Caco-2 (cell line): ENCODE measurements at regions of chr6 and their contacts with region 1.

Region 1: GRCh38 chr6:89122625-89123024 is 4.8 kb upstream of the SRSF12 start:
- DNase-seq: peak in 1 of 2 experiments; percentile 45
- H3K4me3 ChIP-seq: no peak overlapping the region
- H3K4me3 Mint-ChIP-seq: no peak overlapping the region
- H3K27ac Mint-ChIP-seq: no peak overlapping the region
- H3K4me1 ChIP-seq: no peaks in the 10 kb centered on the region
- H3K4me1 Mint-ChIP-seq: no peaks in the 10 kb centered on the region
- H3K27me3 ChIP-seq: no peaks in the 10 kb centered on the region
- H3K27me3 Mint-ChIP-seq: no peaks in the 10 kb centered on the region
- CTCF ChIP-seq: peak; percentile 61 to 71

Region 2: DNA sequence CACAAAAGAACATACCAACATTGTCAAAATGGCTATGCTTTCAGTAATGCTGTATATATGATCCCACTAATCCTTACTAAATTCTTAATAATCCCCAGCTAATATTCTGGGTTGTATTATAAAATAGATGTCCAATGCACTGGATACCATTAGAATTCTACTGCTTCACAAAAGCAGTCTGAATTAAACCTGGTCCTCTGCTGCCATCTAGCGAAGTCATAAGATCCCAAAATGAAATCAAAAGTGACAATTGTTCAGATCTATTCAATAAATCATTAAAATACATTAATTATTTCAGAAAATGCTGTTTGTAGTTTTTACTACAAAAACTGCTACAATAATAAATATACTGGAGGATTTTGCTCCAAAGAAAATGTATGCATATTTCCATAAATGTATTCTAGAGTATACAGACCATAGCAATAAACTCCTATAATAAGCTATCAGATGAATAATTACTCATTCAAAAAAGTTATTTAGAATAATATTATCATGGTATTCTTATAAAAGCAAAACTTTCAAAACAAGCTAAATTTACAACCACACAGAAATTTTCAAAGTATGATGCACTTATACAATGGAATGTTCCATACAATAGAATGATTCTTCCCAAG is 251.8 kb before region 1 on chr6:
- CTCF ChIA-PET with region 1: no interaction called
- POLR2A ChIA-PET with region 1: no interaction called
- intact Hi-C with region 1: no loop called
- DNase-seq: peak in 1 of 2 experiments; percentile 51
- H3K4me3 ChIP-seq: no peak overlapping the region
- H3K4me3 Mint-ChIP-seq: no peak overlapping the region
- H3K27ac Mint-ChIP-seq: no peak overlapping the region
- H3K4me1 ChIP-seq: 0 out of 2 replicates have a peak, but pooled peaks cover 3% of the 10 kb centered on the region
- H3K4me1 Mint-ChIP-seq: peaks cover 12% of the 10 kb centered on the region
- H3K27me3 ChIP-seq: no peaks in the 10 kb centered on the region
- H3K27me3 Mint-ChIP-seq: no peaks in the 10 kb centered on the region
- CTCF ChIP-seq: peak; percentile 46 to 56

Region 3: DNA sequence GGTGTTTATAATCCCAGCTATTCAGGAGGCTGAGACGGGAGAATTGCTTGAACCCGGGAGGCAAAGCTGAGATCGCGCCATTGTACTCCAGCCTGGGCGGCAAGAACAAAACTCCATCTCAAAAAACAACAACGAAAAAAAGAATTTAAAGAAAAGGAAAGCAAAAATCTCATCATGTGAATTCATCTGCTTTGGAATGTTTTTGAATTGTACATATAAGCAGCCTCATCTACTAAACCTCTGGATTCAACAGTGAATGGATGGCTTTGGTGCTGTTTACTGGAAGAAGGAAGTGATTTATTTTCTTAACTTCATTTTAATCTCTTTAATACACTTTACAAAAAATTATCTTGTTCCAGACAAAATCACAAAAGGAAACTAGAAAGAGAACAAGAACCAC is 93.9 kb before region 1 on chr6:
- CTCF ChIA-PET with region 1: no interaction called
- POLR2A ChIA-PET with region 1: no interaction called
- intact Hi-C with region 1: no loop called
- DNase-seq: no peak
- H3K4me3 ChIP-seq: no peak overlapping the region
- H3K4me3 Mint-ChIP-seq: no peak overlapping the region
- H3K27ac Mint-ChIP-seq: no peak overlapping the region
- H3K4me1 ChIP-seq: no peaks in the 10 kb centered on the region
- H3K4me1 Mint-ChIP-seq: no peaks in the 10 kb centered on the region
- H3K27me3 ChIP-seq: no peaks in the 10 kb centered on the region
- H3K27me3 Mint-ChIP-seq: no peaks in the 10 kb centered on the region
- CTCF ChIP-seq: no peak

Region 4: DNA sequence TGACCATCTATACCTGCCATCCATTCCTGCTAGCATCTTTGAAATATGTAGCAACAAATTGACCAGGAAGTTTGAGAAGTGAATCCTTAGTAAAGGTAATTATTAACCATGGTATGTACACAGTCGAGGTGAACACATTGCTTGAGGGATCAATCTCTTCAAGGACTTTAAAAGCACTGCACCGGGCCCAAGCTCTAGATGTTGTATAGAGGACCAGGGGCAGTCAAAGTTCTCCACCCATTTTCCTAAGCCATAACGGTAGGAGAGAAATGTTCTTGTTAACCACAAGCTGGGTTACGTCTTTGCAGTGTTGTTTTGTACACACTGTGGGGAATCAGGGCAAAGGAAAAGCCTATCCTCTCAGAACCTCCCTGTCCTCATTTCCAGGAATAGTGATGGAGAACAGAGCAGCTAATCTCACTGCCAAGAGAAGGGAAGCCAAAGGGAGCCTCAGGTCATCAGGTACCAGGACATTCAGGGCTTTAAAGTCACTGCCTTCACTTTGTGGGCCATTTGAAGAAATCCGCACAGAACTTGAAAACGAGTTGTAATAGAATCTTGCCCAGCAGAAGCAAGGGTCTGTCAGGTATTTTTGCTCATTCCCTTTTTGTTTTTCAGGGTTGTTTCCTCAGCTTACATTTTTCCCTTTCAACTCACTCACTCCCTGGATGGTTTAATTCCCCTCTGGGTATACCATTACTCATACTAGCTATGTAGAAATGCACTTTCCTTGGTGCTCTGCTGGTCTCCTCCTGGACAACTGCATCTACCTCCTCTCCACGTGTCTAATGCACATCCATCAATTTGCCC is 17.9 kb after region 1 on chr6:
- CTCF ChIA-PET with region 1: interaction called, 3 read pairs
- POLR2A ChIA-PET with region 1: no interaction called
- intact Hi-C with region 1: loop called (anchors 2 kb)
- DNase-seq: peak; percentile 51
- H3K4me3 ChIP-seq: no peak overlapping the region
- H3K4me3 Mint-ChIP-seq: no peak overlapping the region
- H3K27ac Mint-ChIP-seq: peak overlapping the region; percentile 77
- H3K4me1 ChIP-seq: peaks cover 28% of the 10 kb centered on the region
- H3K4me1 Mint-ChIP-seq: peaks cover 33% of the 10 kb centered on the region
- H3K27me3 ChIP-seq: no peaks in the 10 kb centered on the region
- H3K27me3 Mint-ChIP-seq: no peaks in the 10 kb centered on the region
- CTCF ChIP-seq: no peak

Region 5: GRCh38 chr6:89221971-89222711 is 99.5 kb after region 1 on chr6:
- CTCF ChIA-PET with region 1: no interaction called
- POLR2A ChIA-PET with region 1: no interaction called
- intact Hi-C with region 1: no loop called
- DNase-seq: no peak
- H3K4me3 ChIP-seq: no peak overlapping the region
- H3K4me3 Mint-ChIP-seq: no peak overlapping the region
- H3K27ac Mint-ChIP-seq: no peak overlapping the region
- H3K4me1 ChIP-seq: no peaks in the 10 kb centered on the region
- H3K4me1 Mint-ChIP-seq: no peaks in the 10 kb centered on the region
- H3K27me3 ChIP-seq: no peaks in the 10 kb centered on the region
- H3K27me3 Mint-ChIP-seq: no peaks in the 10 kb centered on the region
- CTCF ChIP-seq: no peak

Region 6: DNA sequence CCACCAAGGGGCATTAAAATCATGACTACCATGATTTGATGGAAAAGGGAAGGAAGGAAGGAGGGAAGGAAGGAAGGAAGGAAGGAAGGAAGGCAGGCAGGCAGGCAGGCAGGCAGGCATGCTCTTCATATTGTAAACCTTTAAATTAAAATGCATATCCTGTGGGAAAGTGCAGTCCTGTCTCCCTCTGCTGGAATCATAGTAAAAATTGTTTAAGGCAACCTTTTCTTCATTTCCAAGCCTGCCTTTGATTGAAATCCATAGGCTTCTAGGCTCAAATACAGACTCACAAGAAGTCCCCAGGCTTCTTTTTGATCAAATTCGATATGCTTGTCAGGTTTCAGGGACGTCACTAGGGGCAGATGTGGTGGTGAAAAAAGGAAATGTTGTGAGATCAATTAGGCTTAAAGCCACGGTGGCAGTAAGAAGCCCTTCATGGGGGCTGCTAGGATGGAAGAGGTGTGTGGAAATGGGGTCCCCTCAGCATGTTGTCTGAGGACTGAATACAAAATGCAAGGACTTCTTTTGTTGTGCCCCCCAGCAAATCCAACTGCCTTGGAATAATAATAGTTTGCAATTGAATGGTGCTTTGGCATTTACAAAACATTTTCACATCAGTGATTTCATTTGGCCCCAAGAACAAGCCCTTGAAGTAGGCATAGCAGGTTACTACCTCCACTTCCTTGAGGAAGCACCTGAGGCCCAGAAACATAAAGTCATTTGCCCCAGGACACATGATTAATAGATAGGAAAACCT is 120.1 kb after region 1 on chr6:
- CTCF ChIA-PET with region 1: interaction called, 3 read pairs
- POLR2A ChIA-PET with region 1: no interaction called
- intact Hi-C with region 1: loop called (anchors 1 kb)
- DNase-seq: peak in 1 of 2 experiments; percentile 35
- H3K4me3 ChIP-seq: no peak overlapping the region
- H3K4me3 Mint-ChIP-seq: no peak overlapping the region
- H3K27ac Mint-ChIP-seq: no peak overlapping the region
- H3K4me1 ChIP-seq: no peaks in the 10 kb centered on the region
- H3K4me1 Mint-ChIP-seq: no peaks in the 10 kb centered on the region
- H3K27me3 ChIP-seq: no peaks in the 10 kb centered on the region
- H3K27me3 Mint-ChIP-seq: peaks cover 6% of the 10 kb centered on the region
- CTCF ChIP-seq: peak; percentile 46 to 64